SK-N-SH (cell line): ENCODE measurements at regions of chr15 and their contacts with region 1.

Region 1: GRCh38 chr15:74127260-74127953 is 3.0 kb upstream of the ISLR2 start:
- DNase-seq: peak; percentile 94
- H3K4me3 ChIP-seq: peak overlapping the region; percentile 42 to 59
- H3K27ac ChIP-seq: peak overlapping the region in 1 of 2 experiments; percentile 65; a peak in 1 of 4 replicates
- H3K4me1 ChIP-seq: peaks cover 0 to 31% of the 10 kb centered on the region in 2 experiments; a peak in 1 of 4 replicates
- H3K27me3 ChIP-seq: peaks cover 32% of the 10 kb centered on the region
- CTCF ChIP-seq: peak; percentile 80
- EP300 ChIP-seq: no peak
- RAD21 ChIP-seq: peak; percentile 97

Region 2: GRCh38 chr15:73691396-73691795 is 436.0 kb before region 1 on chr15:
- CTCF ChIA-PET with region 1: no interaction called
- POLR2A ChIA-PET with region 1: no interaction called
- DNase-seq: no peak
- H3K4me3 ChIP-seq: no peak overlapping the region
- H3K27ac ChIP-seq: no peak overlapping the region
- H3K4me1 ChIP-seq: peaks cover 23 to 39% of the 10 kb centered on the region in 2 experiments; a peak in 3 of 4 replicates
- H3K27me3 ChIP-seq: no peaks in the 10 kb centered on the region
- CTCF ChIP-seq: no peak
- EP300 ChIP-seq: no peak
- RAD21 ChIP-seq: peak; percentile 24

Region 3: DNA sequence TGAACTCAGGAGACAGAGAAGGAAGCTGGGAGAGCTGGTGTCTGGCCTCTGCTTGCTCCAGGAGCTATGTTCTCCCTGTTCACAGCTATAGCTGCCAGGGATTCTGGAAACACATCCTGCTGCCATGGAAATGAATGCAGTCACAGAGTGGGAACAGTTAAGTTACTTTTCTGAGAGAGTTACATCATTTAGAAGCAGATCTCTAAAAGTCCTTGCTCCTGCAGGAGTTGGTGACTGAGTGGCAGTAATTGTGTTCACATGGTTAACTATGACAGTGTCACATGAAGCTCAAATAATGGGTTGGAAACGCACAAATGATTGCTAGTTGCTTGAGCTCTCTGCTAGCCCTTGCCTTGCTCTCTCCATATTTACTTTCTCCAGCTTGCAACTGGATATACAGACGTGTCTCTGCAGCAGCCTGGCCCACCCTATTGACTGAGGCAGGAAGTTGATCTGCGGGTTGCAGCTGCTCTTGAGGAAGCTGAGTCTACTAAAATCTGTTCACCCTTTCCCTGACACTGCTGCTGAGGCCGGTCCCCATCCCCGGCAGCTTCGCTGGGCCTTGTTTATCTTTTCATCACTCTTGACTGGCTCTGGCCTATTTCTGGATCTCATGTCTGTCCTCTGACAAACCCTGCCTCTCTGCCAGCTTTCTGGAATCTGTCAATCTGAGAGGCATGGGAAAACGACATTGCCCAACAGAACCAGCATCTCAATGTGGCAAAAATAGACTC is 29.4 kb after region 1 on chr15:
- CTCF ChIA-PET with region 1: interaction called, 15 read pairs
- POLR2A ChIA-PET with region 1: interaction called, 3 read pairs
- DNase-seq: peak; percentile 79
- H3K4me3 ChIP-seq: 0 out of 4 replicates have a peak overlapping the region, but pooled peaks of 1 of the 2 experiments have one; percentile 10
- H3K27ac ChIP-seq: peak overlapping the region; percentile 82 to 93
- H3K4me1 ChIP-seq: peaks cover 12 to 30% of the 10 kb centered on the region in 2 experiments; a peak in 3 of 4 replicates
- H3K27me3 ChIP-seq: no peaks in the 10 kb centered on the region
- CTCF ChIP-seq: no peak
- EP300 ChIP-seq: peak; percentile 43 to 94; a peak in 3 of 4 replicates
- RAD21 ChIP-seq: 0 out of 2 replicates have a peak, but pooled peaks have one; percentile 21

Region 4: GRCh38 chr15:74202452-74203428 is 75.3 kb after region 1 on chr15 and contains the start of gene STRA6:
- CTCF ChIA-PET with region 1: interaction called, 19 read pairs
- POLR2A ChIA-PET with region 1: interaction called, 13 read pairs
- DNase-seq: peak; percentile 90
- H3K4me3 ChIP-seq: peak within 1 kb of the TSS; percentile 18 to 50; a peak in 3 of 4 replicates
- H3K27ac ChIP-seq: peak within 1 kb of the TSS; percentile 80 to 97
- H3K4me1 ChIP-seq: peaks cover 64 to 95% of the 10 kb centered on the region in 2 experiments
- H3K27me3 ChIP-seq: no peaks in the 10 kb centered on the region
- CTCF ChIP-seq: peak; percentile 35
- EP300 ChIP-seq: peak; percentile 17 to 48; a peak in 1 of 4 replicates
- RAD21 ChIP-seq: peak; percentile 45; the same call in 1 of the 2 replicates
- polyA plus RNA-seq, gene STRA6: 27.9 and 31.0 TPM in 2 replicates

Region 5: GRCh38 chr15:74245342-74245931 is 118.0 kb after region 1 on chr15:
- CTCF ChIA-PET with region 1: interaction called, 11 read pairs
- POLR2A ChIA-PET with region 1: no interaction called
- DNase-seq: peak; percentile 94
- H3K4me3 ChIP-seq: peak overlapping the region in 1 of 2 experiments; percentile 4; a peak in 1 of 4 replicates
- H3K27ac ChIP-seq: peak overlapping the region in 1 of 2 experiments; percentile 94; a peak in 2 of 4 replicates
- H3K4me1 ChIP-seq: peaks cover 31 to 58% of the 10 kb centered on the region in 2 experiments
- H3K27me3 ChIP-seq: no peaks in the 10 kb centered on the region
- CTCF ChIP-seq: no peak
- EP300 ChIP-seq: peak in 1 of 2 experiments; percentile 82; a peak in 2 of 4 replicates
- RAD21 ChIP-seq: peak; percentile 40

Region 6: DNA sequence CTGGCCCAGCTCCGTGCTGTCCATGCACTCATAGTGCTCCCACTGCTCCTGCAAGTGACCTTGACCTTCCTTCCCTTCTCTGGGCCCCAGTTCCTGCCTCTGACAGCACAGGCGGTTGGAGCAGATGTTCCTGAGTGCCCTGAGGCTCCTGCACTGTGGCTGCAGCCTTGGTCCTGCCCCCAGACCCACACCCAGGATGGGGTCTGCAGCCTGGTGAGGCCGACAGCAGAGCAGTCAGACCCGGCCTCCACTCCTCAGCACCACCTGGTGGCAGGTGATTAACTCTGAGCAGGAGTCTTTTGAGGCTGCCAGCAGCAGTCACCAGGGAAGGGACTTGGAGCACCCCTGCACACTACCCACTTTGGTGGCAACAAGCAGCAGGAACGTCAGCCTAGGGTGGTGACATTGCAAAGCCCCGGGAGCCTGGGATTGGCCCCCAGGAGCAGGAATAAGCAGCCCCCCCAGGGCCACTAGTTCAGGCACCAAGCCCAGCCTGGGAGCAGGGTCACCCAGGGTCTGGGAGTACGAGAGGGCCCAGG is 175.5 kb after region 1 on chr15:
- CTCF ChIA-PET with region 1: interaction called, 110 read pairs
- POLR2A ChIA-PET with region 1: interaction called, 7 read pairs
- DNase-seq: peak; percentile 93
- H3K4me3 ChIP-seq: no peak overlapping the region; a peak in 1 of 4 replicates
- H3K27ac ChIP-seq: peak overlapping the region in 1 of 2 experiments; percentile 95; a peak in 2 of 4 replicates
- H3K4me1 ChIP-seq: peaks cover 0 to 50% of the 10 kb centered on the region in 2 experiments; a peak in 2 of 4 replicates
- H3K27me3 ChIP-seq: no peaks in the 10 kb centered on the region
- CTCF ChIP-seq: peak; percentile 77
- EP300 ChIP-seq: peak in 1 of 2 experiments; percentile 90; a peak in 2 of 4 replicates
- RAD21 ChIP-seq: peak; percentile 87